H1 (cell line): ENCODE measurements at regions of chr1 and their contacts with region 1.

Region 1: DNA sequence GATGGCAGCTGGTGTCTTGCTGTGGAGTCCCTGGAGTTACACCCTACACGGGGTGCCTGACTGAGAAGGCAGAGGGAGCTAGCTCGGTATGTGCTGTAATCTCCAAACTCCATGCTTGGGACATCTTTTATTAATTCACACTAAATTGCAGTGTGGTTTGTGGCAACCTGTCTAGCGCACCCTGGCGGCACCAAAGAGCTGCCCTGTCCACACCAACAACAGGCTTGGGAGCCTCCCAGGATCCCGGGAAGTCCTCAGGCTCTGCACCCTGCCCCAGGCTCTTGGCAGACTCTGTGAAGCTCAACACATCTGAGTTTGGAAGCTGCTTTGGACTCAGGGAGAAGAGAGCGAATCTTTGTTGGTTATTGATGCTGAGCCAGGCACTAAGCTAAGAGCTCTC is 138.9 kb downstream of the IGSF21 start:
- DNase-seq: no peak
- H3K4me3 ChIP-seq: no peak overlapping the region
- H3K27ac ChIP-seq: no peak overlapping the region
- H3K4me1 ChIP-seq: peaks cover 0 to 7% (median 0%) of the 10 kb centered on the region in 4 experiments; a peak in 1 of 7 replicates
- H3K27me3 ChIP-seq: no peaks in the 10 kb centered on the region
- CTCF ChIP-seq: peak; percentile 40 to 57 (median 49); a peak in 3 of 4 replicates
- EP300 ChIP-seq: no peak
- POLR2A ChIP-seq: no peak
- RAD21 ChIP-seq: peak in 1 of 2 experiments; percentile 32; a peak in 2 of 4 replicates

Region 2: GRCh38 chr1:17274186-17275170 is 972.1 kb before region 1 on chr1:
- CTCF ChIA-PET with region 1: no interaction called
- POLR2A ChIA-PET with region 1: no interaction called
- DNase-seq: peak; percentile 59 to 94
- H3K4me3 ChIP-seq: no peak overlapping the region
- H3K27ac ChIP-seq: no peak overlapping the region
- H3K4me1 ChIP-seq: no peaks in the 10 kb centered on the region; a peak in 1 of 7 replicates
- H3K27me3 ChIP-seq: no peaks in the 10 kb centered on the region
- CTCF ChIP-seq: peak; percentile 84 to 93 (median 92)
- EP300 ChIP-seq: no peak
- POLR2A ChIP-seq: no peak
- RAD21 ChIP-seq: peak; percentile 79 to 83

Region 3: DNA sequence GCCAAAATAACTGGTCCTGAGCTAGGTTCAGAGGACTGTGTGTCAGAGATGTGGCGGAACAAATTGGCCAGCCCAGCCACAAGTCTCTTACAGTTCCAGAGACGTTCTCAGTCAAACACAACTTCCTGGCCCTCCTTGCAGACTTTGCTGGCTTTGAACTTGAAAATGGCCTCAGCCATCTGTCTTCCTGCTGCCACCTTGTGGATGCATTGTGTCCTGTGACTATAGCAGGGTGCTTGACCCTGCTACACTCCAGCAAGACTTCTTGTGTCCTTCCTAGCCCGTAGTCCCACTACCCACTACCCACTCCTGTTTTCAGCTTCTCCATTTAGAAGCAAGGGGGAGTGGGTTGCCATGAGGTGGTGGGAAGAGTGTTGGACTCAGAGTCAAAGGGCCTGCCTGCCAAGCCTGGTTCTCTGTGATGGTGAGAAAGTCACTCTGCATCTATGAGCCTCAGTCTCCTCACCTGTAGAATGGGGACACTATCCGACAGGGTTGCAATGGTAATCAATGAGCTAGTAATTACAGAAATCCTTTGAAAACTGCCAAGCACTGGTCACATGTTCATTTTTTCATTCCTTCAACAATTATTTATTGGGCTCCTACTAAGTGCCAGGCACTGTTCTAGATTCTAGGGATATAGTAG is 29.0 kb before region 1 on chr1:
- CTCF ChIA-PET with region 1: interaction called, 67 read pairs
- POLR2A ChIA-PET with region 1: no interaction called
- DNase-seq: peak; percentile 27 to 68
- H3K4me3 ChIP-seq: no peak overlapping the region
- H3K27ac ChIP-seq: no peak overlapping the region
- H3K4me1 ChIP-seq: no peaks in the 10 kb centered on the region
- H3K27me3 ChIP-seq: no peaks in the 10 kb centered on the region; a peak in 1 of 7 replicates
- CTCF ChIP-seq: peak; percentile 76 to 87 (median 76)
- EP300 ChIP-seq: no peak
- POLR2A ChIP-seq: no peak
- RAD21 ChIP-seq: peak; percentile 68 to 81

Region 4: GRCh38 chr1:18256282-18257235 is 10.0 kb after region 1 on chr1:
- CTCF ChIA-PET with region 1: interaction called, 16 read pairs
- POLR2A ChIA-PET with region 1: interaction called, 5 read pairs
- DNase-seq: peak; percentile 41 to 94
- H3K4me3 ChIP-seq: no peak overlapping the region
- H3K27ac ChIP-seq: no peak overlapping the region
- H3K4me1 ChIP-seq: peaks cover 0 to 5% (median under 1%) of the 10 kb centered on the region in 4 experiments; a peak in 4 of 7 replicates
- H3K27me3 ChIP-seq: peaks cover 0 to 3% (median 0%) of the 10 kb centered on the region in 4 experiments; a peak in 2 of 7 replicates
- CTCF ChIP-seq: no peak
- EP300 ChIP-seq: no peak
- POLR2A ChIP-seq: no peak
- RAD21 ChIP-seq: peak; percentile 3 to 23; a peak in 2 of 4 replicates

Region 5: GRCh38 chr1:18261891-18262290 is 15.3 kb after region 1 on chr1:
- CTCF ChIA-PET with region 1: interaction called, 23 read pairs
- POLR2A ChIA-PET with region 1: interaction called, 5 read pairs
- DNase-seq: no peak
- H3K4me3 ChIP-seq: no peak overlapping the region
- H3K27ac ChIP-seq: no peak overlapping the region
- H3K4me1 ChIP-seq: peaks cover 4 to 18% (median 12%) of the 10 kb centered on the region in 4 experiments
- H3K27me3 ChIP-seq: peaks cover 0 to 3% (median 0%) of the 10 kb centered on the region in 4 experiments; a peak in 2 of 7 replicates
- CTCF ChIP-seq: no peak
- EP300 ChIP-seq: no peak
- POLR2A ChIP-seq: no peak
- RAD21 ChIP-seq: no peak

Region 6: DNA sequence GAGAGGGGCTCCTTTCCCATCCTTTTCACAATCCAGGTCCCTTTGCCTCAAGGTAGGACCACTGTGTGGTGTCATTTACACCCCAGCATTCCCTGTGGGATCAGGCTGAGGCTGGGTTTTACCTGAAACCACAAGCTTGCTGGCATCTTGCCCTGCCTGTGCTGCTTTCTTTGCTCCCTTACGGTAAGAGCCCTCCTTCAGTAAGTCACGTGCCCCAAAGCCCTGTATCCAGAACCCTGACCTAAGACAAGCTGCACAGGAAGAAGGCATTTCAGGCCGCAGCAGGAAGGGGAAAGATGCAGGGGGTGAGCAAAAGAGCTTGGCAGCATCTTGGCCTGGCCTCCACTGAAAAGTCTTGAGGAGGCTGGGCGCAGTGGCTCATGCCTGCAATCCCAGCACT is 292.6 kb after region 1 on chr1:
- CTCF ChIA-PET with region 1: no interaction called
- POLR2A ChIA-PET with region 1: no interaction called
- DNase-seq: peak in 1 of 2 experiments; percentile 27
- H3K4me3 ChIP-seq: no peak overlapping the region
- H3K27ac ChIP-seq: no peak overlapping the region
- H3K4me1 ChIP-seq: peaks cover 0 to 4% (median 2%) of the 10 kb centered on the region in 4 experiments; a peak in 4 of 7 replicates
- H3K27me3 ChIP-seq: peaks cover 0 to 5% (median 0%) of the 10 kb centered on the region in 4 experiments; a peak in 4 of 7 replicates
- CTCF ChIP-seq: no peak
- EP300 ChIP-seq: no peak
- POLR2A ChIP-seq: no peak
- RAD21 ChIP-seq: no peak